Activated CD4-positive, alpha-beta T cell treated with anti-CD3 and anti-CD28 coated beads for 36 hours (primary cell): ENCODE measurements at regions of chr19 and their contacts with region 1.

Region 1: DNA sequence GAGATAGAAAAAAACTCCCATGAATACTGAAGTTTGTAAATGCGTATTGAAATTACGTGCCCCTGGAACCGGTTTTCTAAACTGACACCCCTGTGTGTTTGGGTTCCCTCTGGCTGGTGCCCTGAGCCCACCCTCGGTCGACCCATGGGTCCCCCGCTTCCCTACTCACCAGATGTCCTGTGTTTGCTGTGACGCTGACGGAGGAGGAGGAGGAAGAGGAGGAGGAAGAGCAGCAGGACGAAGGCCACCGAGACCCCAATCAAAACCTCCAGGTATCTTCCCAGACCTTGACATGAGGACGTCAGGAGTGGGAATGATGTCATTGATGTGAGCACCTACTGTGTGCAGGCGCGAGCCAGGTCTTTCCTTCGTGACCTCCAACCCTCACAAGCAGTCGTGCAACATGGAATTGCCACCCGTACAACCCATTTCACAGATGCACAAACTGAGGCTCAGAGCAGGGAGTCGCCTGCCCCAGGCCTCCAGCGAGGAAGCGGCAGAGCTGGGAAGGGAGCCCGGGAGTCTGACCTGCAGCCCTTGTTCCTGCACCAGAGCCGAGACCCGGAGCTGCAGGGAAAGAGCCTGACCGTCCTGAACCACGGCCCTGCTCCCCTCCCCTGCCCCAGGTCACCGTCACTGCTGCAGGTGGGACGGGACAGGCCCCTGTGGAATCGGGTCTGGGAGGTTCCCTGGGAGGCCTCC is 3.7 kb downstream of the LILRB3 start:
- DNase-seq: no peak
- ATAC-seq: no peak
- H3K4me3 Mint-ChIP-seq: no peak overlapping the region
- H3K27ac Mint-ChIP-seq: no peak overlapping the region
- H3K4me1 Mint-ChIP-seq: no peaks in the 10 kb centered on the region
- H3K27me3 Mint-ChIP-seq: peaks cover 8% of the 10 kb centered on the region

Region 2: GRCh38 chr19:54239051-54239450 is 19.9 kb after region 1 on chr19:
- CTCF ChIA-PET with region 1: no interaction called
- POLR2A ChIA-PET with region 1: no interaction called
- intact Hi-C with region 1: loop called (anchors 2 kb)
- DNase-seq: no peak
- ATAC-seq: no peak
- H3K4me3 Mint-ChIP-seq: no peak overlapping the region
- H3K27ac Mint-ChIP-seq: no peak overlapping the region
- H3K4me1 Mint-ChIP-seq: no peaks in the 10 kb centered on the region
- H3K27me3 Mint-ChIP-seq: peaks cover 10% of the 10 kb centered on the region

Region 3: GRCh38 chr19:54248016-54248601 is 29.0 kb after region 1 on chr19:
- CTCF ChIA-PET with region 1: interaction called, 3 read pairs
- POLR2A ChIA-PET with region 1: no interaction called
- intact Hi-C with region 1: loop called in 1 of 2 experiments (anchors 2 kb)
- DNase-seq: peak; percentile 70
- ATAC-seq: peak; percentile 94
- H3K4me3 Mint-ChIP-seq: peak overlapping the region; percentile 3
- H3K27ac Mint-ChIP-seq: peak overlapping the region; percentile 13
- H3K4me1 Mint-ChIP-seq: peaks cover 13% of the 10 kb centered on the region
- H3K27me3 Mint-ChIP-seq: peaks cover 7% of the 10 kb centered on the region